ENCODE measurements at regions of chr1 and their contacts with region 1.

Region 1: DNA sequence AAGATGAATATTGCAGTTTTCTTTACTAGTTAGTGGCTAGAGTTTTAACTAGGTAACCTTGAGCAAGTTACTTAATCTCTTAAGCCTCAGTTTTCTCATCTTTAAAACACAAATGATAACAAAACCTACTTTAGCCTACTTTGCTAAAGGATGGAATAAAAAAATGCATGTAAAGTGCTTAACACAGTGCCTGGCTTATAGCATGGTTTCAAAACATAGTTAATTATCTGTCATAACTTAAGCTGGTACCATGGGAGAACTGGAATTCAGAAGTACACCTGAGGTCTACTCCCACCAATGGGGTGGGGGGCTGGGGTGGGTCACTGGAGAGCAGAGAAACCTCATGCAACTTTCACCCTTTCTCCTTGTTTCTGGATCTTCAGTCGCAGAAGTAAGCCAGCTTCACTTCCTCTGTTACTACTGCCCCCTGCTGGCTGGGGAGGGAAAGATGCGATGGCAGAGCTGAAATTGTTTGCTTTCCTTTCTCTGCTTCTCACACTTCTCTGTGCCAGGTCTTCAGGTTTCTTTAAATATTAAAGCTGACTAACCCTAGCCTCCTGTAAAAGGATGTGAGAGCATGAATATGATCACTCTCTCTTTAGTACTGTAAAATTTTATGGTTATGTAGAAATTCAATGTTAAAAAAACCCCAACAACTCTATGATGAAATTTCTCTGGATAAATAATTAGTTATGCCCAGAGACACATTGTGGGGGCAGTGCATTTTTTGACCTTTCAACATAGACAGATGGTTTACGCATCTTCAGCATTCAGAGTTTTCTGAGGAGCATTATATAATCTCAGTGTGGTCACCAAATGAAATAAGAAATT is 324.2 kb downstream of the HLX start:
- DNase-seq: peak; percentile 71 to 83
- ATAC-seq: peak; percentile 69 to 88 (median 70)
- H3K4me3 ChIP-seq: no peak overlapping the region
- H3K27ac ChIP-seq: no peak overlapping the region
- H3K4me1 ChIP-seq: peaks cover 6% of the 10 kb centered on the region
- H3K27me3 ChIP-seq: no peaks in the 10 kb centered on the region
- CTCF ChIP-seq: peak; percentile 92

Region 2: GRCh38 chr1:220873868-220874655 is 329.4 kb before region 1 on chr1:
- intact Hi-C with region 1: loop called (anchors 1 to 5 kb)
- DNase-seq: peak in 1 of 2 donors; percentile 42
- ATAC-seq: peak in 3 of 4 donors; percentile 28 to 50 (median 46)
- H3K4me3 ChIP-seq: no peak overlapping the region
- H3K27ac ChIP-seq: no peak overlapping the region
- H3K4me1 ChIP-seq: peaks cover 11% of the 10 kb centered on the region
- H3K27me3 ChIP-seq: no peaks in the 10 kb centered on the region
- CTCF ChIP-seq: peak; percentile 65

Region 3: GRCh38 chr1:220908757-220909156 is 294.7 kb before region 1 on chr1:
- intact Hi-C with region 1: loop called in 1 of 2 experiments (anchors 5 kb)
- DNase-seq: no peak
- ATAC-seq: peak in 2 of 4 donors; percentile 49 to 61
- H3K4me3 ChIP-seq: no peak overlapping the region
- H3K27ac ChIP-seq: no peak overlapping the region
- H3K4me1 ChIP-seq: no peaks in the 10 kb centered on the region
- H3K27me3 ChIP-seq: peaks cover 0 to 1% (median 0%) of the 10 kb centered on the region in 3 donors
- CTCF ChIP-seq: peak; percentile 64

Measured in psoas muscle (tissue), 8 donors.